Thyroid gland (tissue), 4 donors: ENCODE measurements at regions of chr5 and their contacts with region 1.

Region 1: GRCh38 chr5:178590141-178590923 is at the start of gene COL23A1:
- DNase-seq: peak; percentile 86 to 91
- H3K4me3 ChIP-seq: peak within 1 kb of the TSS; percentile 10 to 51 (median 45)
- H3K27ac ChIP-seq: peak within 1 kb of the TSS; percentile 59 to 84 (median 74)
- H3K4me1 ChIP-seq: peaks cover 37 to 38% of the 10 kb centered on the region in 2 donors
- H3K27me3 ChIP-seq: no peaks in the 10 kb centered on the region
- CTCF ChIP-seq: peak; percentile 49 to 97 (median 84)
- POLR2A ChIP-seq: peak; percentile 21 to 83
- total RNA-seq, gene COL23A1: 76.6 to 108 (median 95.7) TPM

Region 2: DNA sequence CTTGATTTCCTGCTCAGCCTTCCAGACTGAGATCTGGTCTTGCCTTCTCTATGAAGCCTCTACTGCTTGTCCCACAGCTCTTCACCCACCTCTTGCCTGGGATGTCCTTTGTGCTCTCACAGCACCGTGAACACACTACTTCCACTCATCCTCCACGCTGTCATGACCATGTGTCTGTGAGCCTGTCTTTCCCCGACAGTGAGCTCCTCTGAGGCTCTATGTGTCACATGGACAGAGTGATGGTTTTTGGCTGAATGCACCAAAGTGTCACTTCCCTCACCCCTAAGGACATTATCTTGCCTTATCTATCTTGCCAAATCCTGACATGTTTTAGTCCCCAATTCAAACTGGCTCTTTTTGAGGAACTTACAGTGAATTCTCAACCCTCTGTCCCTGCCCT is 369.1 kb before region 1 on chr5:
- intact Hi-C with region 1: no loop called
- DNase-seq: no peak
- H3K4me3 ChIP-seq: no peak overlapping the region
- H3K27ac ChIP-seq: no peak overlapping the region
- H3K4me1 ChIP-seq: peaks cover 6 to 14% of the 10 kb centered on the region in 2 donors
- H3K27me3 ChIP-seq: no peaks in the 10 kb centered on the region
- CTCF ChIP-seq: no peak
- POLR2A ChIP-seq: no peak

Region 3: DNA sequence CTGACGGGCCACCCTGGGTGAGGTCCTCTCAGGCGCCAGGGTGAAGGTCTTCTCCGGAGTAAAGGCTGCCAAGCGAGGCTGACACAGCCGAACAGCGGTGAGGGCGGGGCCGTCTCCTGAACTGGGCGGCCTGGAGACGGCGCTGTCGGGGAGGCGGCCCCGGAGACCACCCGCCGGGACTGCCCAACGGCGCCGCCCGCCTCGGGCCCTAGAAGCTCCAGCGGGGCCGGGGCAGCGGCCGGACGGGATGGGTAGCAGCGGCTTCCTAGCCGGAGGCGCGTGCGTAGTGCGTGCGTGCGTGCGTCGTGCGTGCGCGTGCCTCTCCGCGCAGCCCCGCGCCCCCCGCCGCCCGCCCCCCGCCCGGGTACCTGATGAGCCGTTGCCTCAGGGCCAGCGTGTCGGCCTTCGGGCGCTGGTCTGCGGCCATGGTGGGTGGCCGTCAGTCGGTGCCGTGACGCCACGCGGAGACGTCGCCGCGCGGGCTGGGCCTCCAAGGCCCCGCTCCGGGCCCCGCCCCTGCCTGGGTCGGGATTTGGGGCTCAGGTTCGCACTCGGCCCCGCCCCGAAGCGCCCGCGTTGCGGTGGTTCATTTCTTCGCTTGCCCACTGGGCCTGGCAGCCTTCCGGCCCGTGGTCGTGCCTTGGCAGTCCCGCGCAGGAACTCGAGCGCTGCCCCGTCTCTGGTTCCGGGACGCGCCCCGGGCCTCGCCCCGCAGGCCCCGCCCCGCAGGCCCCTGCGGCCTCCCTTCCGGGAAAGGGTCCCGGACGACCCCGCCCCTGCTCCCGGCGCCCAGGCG is 358.0 kb before region 1 on chr5 and contains the start of gene PHYKPL:
- intact Hi-C with region 1: loop called (anchors 5 kb)
- DNase-seq: peak; percentile 80 to 81
- H3K4me3 ChIP-seq: peak within 1 kb of the TSS; percentile 11 to 70 (median 61)
- H3K27ac ChIP-seq: peak within 1 kb of the TSS; percentile 93 to 97 (median 97)
- H3K4me1 ChIP-seq: peaks cover 28 to 56% of the 10 kb centered on the region in 2 donors
- H3K27me3 ChIP-seq: no peaks in the 10 kb centered on the region
- CTCF ChIP-seq: no peak
- POLR2A ChIP-seq: peak in 1 of 2 donors; percentile 63
- total RNA-seq, gene PHYKPL: 61.7 to 90.9 (median 76.0) TPM

Region 4: GRCh38 chr5:178279725-178280438 is 310.4 kb before region 1 on chr5:
- intact Hi-C with region 1: loop called (anchors 2 kb)
- DNase-seq: peak; percentile 95 to 97
- H3K4me3 ChIP-seq: no peak overlapping the region
- H3K27ac ChIP-seq: peak overlapping the region in 1 of 3 donors; percentile 27
- H3K4me1 ChIP-seq: peaks cover 6 to 23% of the 10 kb centered on the region in 2 donors
- H3K27me3 ChIP-seq: no peaks in the 10 kb centered on the region
- CTCF ChIP-seq: peak; percentile 79 to 98 (median 95)
- POLR2A ChIP-seq: no peak

Region 5: GRCh38 chr5:178859625-178860531 is 269.5 kb after region 1 on chr5 and contains the start of gene ZNF354B:
- intact Hi-C with region 1: no loop called
- DNase-seq: peak; percentile 90 to 91
- H3K4me3 ChIP-seq: peak within 1 kb of the TSS; percentile 40 to 98 (median 59)
- H3K27ac ChIP-seq: peak within 1 kb of the TSS; percentile 52 to 80 (median 73)
- H3K4me1 ChIP-seq: peaks cover 0 to 7% of the 10 kb centered on the region in 2 donors
- H3K27me3 ChIP-seq: no peaks in the 10 kb centered on the region
- CTCF ChIP-seq: peak in 2 of 6 experiments; percentile 28 to 36
- POLR2A ChIP-seq: peak in 1 of 2 donors; percentile 76
- total RNA-seq, gene ZNF354B: 17.9 to 34.8 (median 31.4) TPM